GM12878 (cell line): ENCODE measurements at regions of chr1 and their contacts with region 1.

Region 1: GRCh38 chr1:174999216-174999925 is 376 bp upstream of the CACYBP start:
- DNase-seq: peak; percentile 98
- ATAC-seq: peak; percentile 84
- H3K4me3 ChIP-seq: peak overlapping the region; percentile 74
- H3K27ac ChIP-seq: peak overlapping the region; percentile 99
- H3K4me1 ChIP-seq: peaks cover 9% of the 10 kb centered on the region
- H3K27me3 ChIP-seq: no peaks in the 10 kb centered on the region
- CTCF ChIP-seq: no peak
- EP300 ChIP-seq: no peak
- POLR2A ChIP-seq: peak; percentile 96
- RAD21 ChIP-seq: no peak

Region 2: DNA sequence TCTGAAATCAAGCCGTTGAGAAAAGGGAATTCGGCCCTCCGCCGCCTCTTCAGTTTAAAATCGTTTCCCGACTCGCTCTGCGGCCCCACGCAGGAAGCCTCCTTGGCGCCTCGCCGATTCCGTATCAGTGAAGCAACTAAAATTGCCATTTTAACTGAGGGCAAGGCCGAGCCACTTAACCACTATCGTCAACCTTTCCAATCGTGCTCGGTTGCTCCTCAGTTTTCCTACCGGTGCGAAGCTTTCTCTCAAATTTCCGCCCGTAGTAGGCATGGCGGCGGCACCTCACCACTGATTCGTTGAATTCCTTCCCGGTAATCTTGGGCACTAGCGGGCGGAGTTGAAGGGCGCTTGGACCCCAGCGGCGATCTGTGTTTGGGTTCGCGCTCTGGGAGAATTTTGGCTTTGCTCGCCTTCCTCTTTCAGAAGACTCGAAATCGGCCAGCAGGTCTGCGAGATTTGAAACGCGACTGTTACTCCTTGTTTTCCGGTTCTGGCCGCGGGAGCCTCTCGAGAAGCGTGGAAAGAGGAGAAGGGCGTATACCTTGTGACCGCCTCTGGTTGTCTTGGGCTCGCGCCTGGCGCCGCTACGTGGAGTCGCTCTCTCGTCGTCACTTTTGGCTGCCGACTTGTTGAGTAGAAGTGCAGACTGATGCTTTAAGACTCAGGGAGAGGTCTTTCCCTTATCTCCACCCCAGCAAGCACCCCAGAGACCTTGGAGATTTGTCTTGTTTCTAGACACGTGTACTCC is 1174.9 kb before region 1 on chr1 and contains the starts of genes CENPL and DARS2:
- CTCF ChIA-PET with region 1: no interaction called
- POLR2A ChIA-PET with region 1: no interaction called
- RAD21 ChIA-PET with region 1: no interaction called
- SMC1A ChIA-PET with region 1: no interaction called
- in situ Hi-C with region 1: no loop called
- intact Hi-C with region 1: loop called (anchors 10 kb)
- DNase-seq: peak; percentile 94
- ATAC-seq: peak; percentile 87
- H3K4me3 ChIP-seq: peak within 1 kb of the TSS; percentile 92
- H3K27ac ChIP-seq: peak within 1 kb of the TSS; percentile 91
- H3K4me1 ChIP-seq: no peaks in the 10 kb centered on the region; the same call in 1 of the 2 replicates
- H3K27me3 ChIP-seq: no peaks in the 10 kb centered on the region
- CTCF ChIP-seq: no peak
- EP300 ChIP-seq: no peak; a peak in 1 of 4 replicates
- POLR2A ChIP-seq: peak; percentile 83
- RAD21 ChIP-seq: no peak
- polyA plus RNA-seq, gene CENPL: 14.9 to 26.7 TPM
- polyA plus RNA-seq, gene DARS2: 23.9 to 25.2 TPM

Region 3: GRCh38 chr1:174262349-174263241 is 736.8 kb before region 1 on chr1:
- CTCF ChIA-PET with region 1: interaction called, 5 read pairs
- POLR2A ChIA-PET with region 1: no interaction called
- RAD21 ChIA-PET with region 1: interaction called, 3 read pairs
- SMC1A ChIA-PET with region 1: no interaction called
- in situ Hi-C with region 1: loop called (anchors 10 kb)
- intact Hi-C with region 1: loop called (anchors 10 kb)
- DNase-seq: peak; percentile 11
- ATAC-seq: peak; percentile 81
- H3K4me3 ChIP-seq: no peak overlapping the region
- H3K27ac ChIP-seq: no peak overlapping the region
- H3K4me1 ChIP-seq: no peaks in the 10 kb centered on the region
- H3K27me3 ChIP-seq: no peaks in the 10 kb centered on the region
- CTCF ChIP-seq: peak; percentile 67 to 81 (median 77); a peak in 5 of 6 replicates
- EP300 ChIP-seq: no peak
- POLR2A ChIP-seq: no peak
- RAD21 ChIP-seq: peak; percentile 91

Region 4: DNA sequence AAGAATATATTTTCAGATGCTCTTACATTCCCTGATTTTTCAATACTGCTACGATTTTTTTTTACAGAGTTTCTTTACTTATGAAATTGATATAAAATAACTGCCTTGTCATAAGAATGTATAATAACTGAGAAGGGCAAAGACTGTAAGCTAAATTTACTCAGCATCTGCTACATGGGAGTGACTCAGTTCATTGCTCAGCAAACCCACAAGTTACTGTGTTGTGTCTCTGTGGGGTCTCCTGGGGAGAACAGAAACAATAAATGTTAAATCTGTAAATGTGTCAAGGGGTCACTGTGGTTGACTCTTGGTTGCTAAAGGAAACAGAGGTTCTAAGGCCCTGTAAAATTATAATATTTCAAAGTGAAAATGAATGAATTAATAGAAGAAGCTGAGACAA is 210.0 kb before region 1 on chr1:
- CTCF ChIA-PET with region 1: no interaction called
- POLR2A ChIA-PET with region 1: no interaction called
- RAD21 ChIA-PET with region 1: no interaction called
- SMC1A ChIA-PET with region 1: interaction called, 3 read pairs
- in situ Hi-C with region 1: no loop called
- intact Hi-C with region 1: loop called (anchors 5 kb)
- DNase-seq: peak; percentile 50
- ATAC-seq: peak; percentile 86
- H3K4me3 ChIP-seq: no peak overlapping the region
- H3K27ac ChIP-seq: no peak overlapping the region
- H3K4me1 ChIP-seq: peaks cover 32% of the 10 kb centered on the region
- H3K27me3 ChIP-seq: no peaks in the 10 kb centered on the region
- CTCF ChIP-seq: no peak
- EP300 ChIP-seq: peak; percentile 37 to 76; a peak in 2 of 4 replicates
- POLR2A ChIP-seq: no peak
- RAD21 ChIP-seq: no peak

Region 5: GRCh38 chr1:174874331-174875053 is 124.9 kb before region 1 on chr1:
- CTCF ChIA-PET with region 1: interaction called, 9 read pairs
- POLR2A ChIA-PET with region 1: interaction called, 14 read pairs
- RAD21 ChIA-PET with region 1: interaction called, 7 read pairs
- SMC1A ChIA-PET with region 1: interaction called, 4 read pairs
- in situ Hi-C with region 1: no loop called
- intact Hi-C with region 1: no loop called
- DNase-seq: peak; percentile 40
- ATAC-seq: peak; percentile 83
- H3K4me3 ChIP-seq: peak overlapping the region; percentile 54; the same call in 1 of the 2 replicates
- H3K27ac ChIP-seq: peak overlapping the region; percentile 47
- H3K4me1 ChIP-seq: peaks cover 25% of the 10 kb centered on the region
- H3K27me3 ChIP-seq: no peaks in the 10 kb centered on the region
- CTCF ChIP-seq: no peak
- EP300 ChIP-seq: no peak
- POLR2A ChIP-seq: no peak
- RAD21 ChIP-seq: no peak

Region 6: GRCh38 chr1:174953285-174954072 is 45.9 kb before region 1 on chr1:
- CTCF ChIA-PET with region 1: interaction called, 6 read pairs
- POLR2A ChIA-PET with region 1: interaction called, 11 read pairs
- RAD21 ChIA-PET with region 1: interaction called, 16 read pairs
- SMC1A ChIA-PET with region 1: interaction called, 18 read pairs
- in situ Hi-C with region 1: no loop called
- intact Hi-C with region 1: no loop called
- DNase-seq: no peak
- ATAC-seq: peak; percentile 80
- H3K4me3 ChIP-seq: peak overlapping the region; percentile 59; the same call in 1 of the 2 replicates
- H3K27ac ChIP-seq: peak overlapping the region; percentile 48
- H3K4me1 ChIP-seq: peaks cover 25% of the 10 kb centered on the region
- H3K27me3 ChIP-seq: no peaks in the 10 kb centered on the region
- CTCF ChIP-seq: no peak
- EP300 ChIP-seq: peak; percentile 53 to 78; a peak in 2 of 4 replicates
- POLR2A ChIP-seq: no peak
- RAD21 ChIP-seq: no peak

Region 7: GRCh38 chr1:174982971-174983689 is 16.2 kb before region 1 on chr1:
- CTCF ChIA-PET with region 1: interaction called, 54 read pairs
- POLR2A ChIA-PET with region 1: no interaction called
- RAD21 ChIA-PET with region 1: interaction called, 8 read pairs
- SMC1A ChIA-PET with region 1: interaction called, 89 read pairs
- in situ Hi-C with region 1: no loop called
- intact Hi-C with region 1: no loop called
- DNase-seq: no peak
- ATAC-seq: no peak
- H3K4me3 ChIP-seq: no peak overlapping the region
- H3K27ac ChIP-seq: no peak overlapping the region
- H3K4me1 ChIP-seq: no peaks in the 10 kb centered on the region
- H3K27me3 ChIP-seq: no peaks in the 10 kb centered on the region
- CTCF ChIP-seq: peak; percentile 44 to 49 (median 49); a peak in 5 of 6 replicates
- EP300 ChIP-seq: no peak
- POLR2A ChIP-seq: no peak
- RAD21 ChIP-seq: peak; percentile 58